CD4-positive, alpha-beta memory T cell (primary cell): ENCODE measurements at regions of chr6 and their contacts with region 1.

Region 1: DNA sequence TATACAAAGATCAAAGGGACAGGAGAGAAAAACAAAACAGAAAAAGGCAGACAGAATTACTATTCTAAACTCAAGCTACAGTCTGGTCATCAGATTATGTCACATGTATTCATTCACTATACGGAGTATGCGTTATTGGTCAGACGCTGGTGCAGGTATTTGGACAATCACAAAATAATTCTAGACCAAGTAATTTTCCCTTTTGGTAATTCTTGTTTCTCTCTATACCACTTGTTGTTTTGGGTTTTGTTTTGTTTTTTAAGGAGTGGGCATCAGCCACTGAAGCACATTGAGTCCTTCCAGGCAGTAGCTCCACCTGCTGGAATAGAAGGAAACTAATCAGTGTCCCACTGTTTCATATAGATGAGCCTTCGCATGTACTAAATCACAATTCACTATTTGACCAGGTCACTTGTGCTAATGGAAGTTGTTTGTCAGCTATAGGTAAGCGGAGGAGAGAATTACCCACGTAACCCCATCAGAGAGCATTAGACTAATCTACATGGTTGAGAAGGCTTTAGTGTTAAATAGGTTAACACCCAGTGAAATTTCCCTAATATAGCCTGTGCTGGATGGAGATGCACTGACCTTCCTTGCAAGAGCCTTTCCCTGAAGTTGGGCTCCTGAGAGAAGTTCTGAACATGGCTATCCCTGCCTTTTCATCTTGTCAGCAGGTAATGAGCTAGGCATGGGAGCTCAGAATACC is 77.9 kb downstream of the TNFAIP3 start:
- DNase-seq: peak in 4 of 5 donors; percentile 41 to 56 (median 48)
- H3K4me3 ChIP-seq: no peak overlapping the region
- H3K4me3 Mint-ChIP-seq: peak overlapping the region in 1 of 8 donors; percentile 12
- H3K27ac ChIP-seq: no peak overlapping the region
- H3K27ac Mint-ChIP-seq: peak overlapping the region in 5 of 7 donors; percentile 10 to 67 (median 63)
- H3K4me1 ChIP-seq: peaks cover 16% of the 10 kb centered on the region
- H3K4me1 Mint-ChIP-seq: peaks cover 13 to 22% (median 19%) of the 10 kb centered on the region in 4 donors
- H3K27me3 ChIP-seq: no peaks in the 10 kb centered on the region
- H3K27me3 Mint-ChIP-seq: no peaks in the 10 kb centered on the region

Region 2: DNA sequence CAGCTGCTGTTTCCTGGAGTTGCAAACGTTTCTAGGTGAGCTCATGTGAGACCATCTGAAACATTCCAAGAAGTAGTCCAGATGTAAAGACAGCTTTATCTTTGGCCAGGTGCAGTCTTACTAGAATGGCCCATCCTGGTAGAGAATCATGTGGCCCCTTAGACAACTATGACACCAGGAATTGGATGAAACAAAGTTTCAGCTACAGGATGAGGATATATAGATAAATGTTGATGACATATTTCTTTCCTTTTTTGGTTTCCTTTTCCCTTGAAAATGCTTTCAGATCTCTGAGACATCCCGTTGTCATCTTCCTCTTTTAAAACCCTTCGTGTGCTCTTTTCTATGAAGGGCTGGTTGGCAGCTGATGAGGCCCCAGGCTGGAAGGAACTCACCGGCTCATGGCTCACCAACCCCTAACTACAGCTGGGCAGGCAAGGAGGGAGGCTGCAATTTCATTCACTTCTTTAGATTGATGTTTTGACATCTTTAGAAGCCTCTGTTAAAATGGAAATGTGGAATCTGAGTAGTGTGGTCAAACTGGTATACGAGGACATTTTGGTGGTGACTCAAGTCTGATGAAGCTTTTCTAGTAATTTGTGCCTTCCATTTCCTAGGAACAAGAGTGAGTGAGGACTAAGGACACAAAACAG is 245.8 kb before region 1 on chr6:
- CTCF ChIA-PET with region 1: interaction called, 74 read pairs
- POLR2A ChIA-PET with region 1: no interaction called
- intact Hi-C with region 1: no loop called
- DNase-seq: peak in 1 of 5 donors; percentile 15
- H3K4me3 ChIP-seq: no peak overlapping the region
- H3K4me3 Mint-ChIP-seq: peak overlapping the region in 5 of 8 donors; percentile 2 to 77 (median 56)
- H3K27ac ChIP-seq: no peak overlapping the region
- H3K27ac Mint-ChIP-seq: peak overlapping the region in 6 of 7 donors; percentile 61 to 95 (median 88)
- H3K4me1 ChIP-seq: peaks cover 19% of the 10 kb centered on the region
- H3K4me1 Mint-ChIP-seq: peaks cover 12 to 24% (median 18%) of the 10 kb centered on the region in 4 donors
- H3K27me3 ChIP-seq: no peaks in the 10 kb centered on the region
- H3K27me3 Mint-ChIP-seq: peaks cover 0 to 8% of the 10 kb centered on the region in 2 donors

Region 3: DNA sequence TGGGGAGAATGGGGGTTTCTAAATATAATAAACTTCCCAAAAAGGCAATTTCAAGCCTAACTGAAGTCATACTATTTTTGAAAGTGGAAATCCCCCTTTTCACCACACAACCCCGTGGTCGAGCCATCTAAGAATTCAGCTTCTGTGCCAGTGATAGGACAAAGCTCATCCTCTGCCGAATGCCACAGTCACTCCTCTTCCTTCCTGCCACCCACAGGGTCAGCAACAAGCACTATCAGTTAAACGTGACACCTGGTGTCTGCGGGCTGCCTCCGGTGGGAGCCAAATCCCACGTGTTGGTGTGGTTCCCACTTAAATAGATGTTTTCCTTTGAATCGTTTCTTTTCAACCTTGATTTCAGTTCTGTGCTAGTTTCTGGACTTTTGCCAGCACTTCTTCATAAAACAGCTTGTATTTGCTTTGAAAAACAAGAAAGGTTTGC is 17.1 kb before region 1 on chr6:
- CTCF ChIA-PET with region 1: interaction called, 25 read pairs
- POLR2A ChIA-PET with region 1: no interaction called
- intact Hi-C with region 1: no loop called
- DNase-seq: peak; percentile 76 to 93 (median 81)
- H3K4me3 ChIP-seq: peak overlapping the region in 1 of 2 donors; percentile 6
- H3K4me3 Mint-ChIP-seq: peak overlapping the region in 7 of 8 donors; percentile 19 to 78 (median 76)
- H3K27ac ChIP-seq: peak overlapping the region; percentile 34
- H3K27ac Mint-ChIP-seq: peak overlapping the region; percentile 49 to 94 (median 84)
- H3K4me1 ChIP-seq: peaks cover 31% of the 10 kb centered on the region
- H3K4me1 Mint-ChIP-seq: peaks cover 18 to 35% (median 26%) of the 10 kb centered on the region in 4 donors
- H3K27me3 ChIP-seq: no peaks in the 10 kb centered on the region
- H3K27me3 Mint-ChIP-seq: no peaks in the 10 kb centered on the region

Region 4: GRCh38 chr6:137967689-137968454 is 22.9 kb after region 1 on chr6:
- CTCF ChIA-PET with region 1: interaction called, 12 read pairs
- POLR2A ChIA-PET with region 1: no interaction called
- intact Hi-C with region 1: no loop called
- DNase-seq: no peak
- H3K4me3 ChIP-seq: no peak overlapping the region
- H3K4me3 Mint-ChIP-seq: no peak overlapping the region
- H3K27ac ChIP-seq: no peak overlapping the region
- H3K27ac Mint-ChIP-seq: peak overlapping the region in 6 of 7 donors; percentile 34 to 77 (median 54)
- H3K4me1 ChIP-seq: peaks cover 29% of the 10 kb centered on the region
- H3K4me1 Mint-ChIP-seq: peaks cover 24 to 37% (median 36%) of the 10 kb centered on the region in 4 donors
- H3K27me3 ChIP-seq: no peaks in the 10 kb centered on the region
- H3K27me3 Mint-ChIP-seq: no peaks in the 10 kb centered on the region

Region 5: GRCh38 chr6:138031850-138032249 is 86.9 kb after region 1 on chr6:
- CTCF ChIA-PET with region 1: no interaction called
- POLR2A ChIA-PET with region 1: no interaction called
- intact Hi-C with region 1: no loop called
- DNase-seq: no peak
- H3K4me3 ChIP-seq: no peak overlapping the region
- H3K4me3 Mint-ChIP-seq: no peak overlapping the region
- H3K27ac ChIP-seq: no peak overlapping the region
- H3K27ac Mint-ChIP-seq: no peak overlapping the region
- H3K4me1 ChIP-seq: no peaks in the 10 kb centered on the region
- H3K4me1 Mint-ChIP-seq: no peaks in the 10 kb centered on the region
- H3K27me3 ChIP-seq: no peaks in the 10 kb centered on the region
- H3K27me3 Mint-ChIP-seq: peaks cover 0 to 4% of the 10 kb centered on the region in 2 donors

Region 6: DNA sequence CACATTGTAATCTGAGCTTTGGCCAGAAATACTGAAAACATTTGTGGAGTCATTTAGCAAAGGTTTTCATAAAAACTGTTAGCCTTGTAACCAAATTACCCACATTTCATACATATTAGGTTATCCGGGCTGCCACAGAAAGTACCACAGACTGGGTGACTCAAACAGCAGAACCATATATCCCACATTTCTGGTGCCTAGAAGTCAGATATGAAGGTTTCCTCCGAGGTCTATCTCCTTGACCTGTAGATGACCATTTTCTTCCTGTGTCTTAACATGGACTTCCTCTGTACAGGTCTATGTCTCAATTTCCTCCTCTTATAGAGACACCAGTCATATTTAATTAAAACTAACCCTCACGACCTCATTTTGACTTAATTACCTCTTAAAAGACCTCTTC is 383.3 kb after region 1 on chr6:
- CTCF ChIA-PET with region 1: no interaction called
- POLR2A ChIA-PET with region 1: no interaction called
- intact Hi-C with region 1: no loop called
- DNase-seq: no peak
- H3K4me3 ChIP-seq: no peak overlapping the region
- H3K4me3 Mint-ChIP-seq: no peak overlapping the region
- H3K27ac ChIP-seq: no peak overlapping the region
- H3K27ac Mint-ChIP-seq: no peak overlapping the region
- H3K4me1 ChIP-seq: no peaks in the 10 kb centered on the region
- H3K4me1 Mint-ChIP-seq: no peaks in the 10 kb centered on the region
- H3K27me3 ChIP-seq: no peaks in the 10 kb centered on the region
- H3K27me3 Mint-ChIP-seq: peaks cover 3 to 8% of the 10 kb centered on the region in 2 donors